Right ventricle myocardium superior (tissue), 1 donor: ENCODE measurements at regions of chr7 and their contacts with region 1.

Region 1: DNA sequence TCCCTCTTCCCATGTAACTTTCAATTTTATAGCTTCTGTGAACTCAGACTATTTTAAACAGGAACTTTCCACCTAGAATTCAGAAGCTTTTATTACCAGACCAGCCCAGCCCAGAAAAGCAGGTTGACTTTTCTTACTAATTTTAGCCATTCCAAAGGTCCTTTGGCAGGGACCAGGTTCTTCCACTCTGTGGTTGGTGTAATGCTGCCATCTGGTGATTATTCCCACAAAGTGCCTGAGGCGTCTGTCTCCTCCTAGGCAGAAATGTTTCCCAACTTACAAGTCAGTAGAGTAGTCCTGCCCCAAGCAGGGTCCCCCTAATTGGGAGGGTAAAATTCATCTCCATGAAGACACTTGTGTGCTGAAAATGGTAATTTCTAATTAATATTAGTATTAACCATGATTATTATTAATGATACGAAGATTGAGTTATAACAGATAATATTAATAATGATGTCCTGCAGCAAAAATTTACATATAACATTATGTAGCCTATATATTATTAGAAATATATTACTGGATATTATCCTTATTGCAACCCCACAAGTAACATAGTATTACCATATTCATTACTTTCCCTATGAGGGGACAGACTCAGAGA is 53.0 kb upstream of the PPP1R17 start:
- DNase-seq: no peak
- ATAC-seq: peak; percentile 92

Region 2: GRCh38 chr7:31134246-31135188 is 499.5 kb before region 1 on chr7:
- intact Hi-C with region 1: loop called (anchors 5 kb)
- DNase-seq: peak; percentile 72
- ATAC-seq: peak; percentile 98

Region 3: GRCh38 chr7:31443457-31443856 is 190.5 kb before region 1 on chr7:
- intact Hi-C with region 1: loop called (anchors 5 kb)
- DNase-seq: no peak
- ATAC-seq: no peak